ENCODE measurements at regions of chr7 and their contacts with region 1.

Region 1: DNA sequence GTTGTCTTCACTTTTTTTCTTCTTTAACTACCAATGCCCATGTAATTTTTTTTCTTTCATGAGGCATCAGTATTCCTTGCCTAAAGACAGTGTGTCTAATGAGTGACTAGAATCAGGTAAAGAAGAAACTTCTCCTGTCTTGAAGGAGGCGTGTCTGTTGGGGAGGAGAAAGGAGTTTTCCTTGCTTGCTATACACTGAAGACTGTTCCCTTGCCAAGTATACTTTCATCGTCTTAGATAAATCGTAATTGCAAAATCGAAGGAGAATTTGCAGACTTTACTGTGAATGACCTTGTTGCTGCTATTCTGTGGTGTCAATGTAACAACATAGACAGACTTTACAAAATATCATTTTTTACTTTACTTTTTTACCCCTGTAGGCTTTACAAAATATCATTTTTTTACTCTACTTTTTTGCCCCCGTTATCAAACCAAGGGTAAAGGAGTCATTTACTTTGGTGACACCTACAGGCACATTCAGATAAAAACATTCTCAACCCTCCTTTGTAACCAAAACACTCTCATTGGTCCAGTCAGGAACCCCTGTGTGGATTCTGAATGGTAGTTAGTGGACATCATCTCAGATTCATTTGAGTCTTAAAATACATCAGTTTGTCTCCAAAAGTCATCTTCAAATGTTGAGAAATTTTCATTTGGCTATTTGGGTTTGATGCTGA is 232.4 kb downstream of the AHR start:
- DNase-seq: peak; percentile 44
- H3K4me3 Mint-ChIP-seq: no peak overlapping the region
- H3K27ac Mint-ChIP-seq: peak overlapping the region; percentile 52
- H3K4me1 Mint-ChIP-seq: peaks cover 45% of the 10 kb centered on the region
- H3K27me3 Mint-ChIP-seq: no peaks in the 10 kb centered on the region
- CTCF ChIP-seq: peak; percentile 17

Region 2: DNA sequence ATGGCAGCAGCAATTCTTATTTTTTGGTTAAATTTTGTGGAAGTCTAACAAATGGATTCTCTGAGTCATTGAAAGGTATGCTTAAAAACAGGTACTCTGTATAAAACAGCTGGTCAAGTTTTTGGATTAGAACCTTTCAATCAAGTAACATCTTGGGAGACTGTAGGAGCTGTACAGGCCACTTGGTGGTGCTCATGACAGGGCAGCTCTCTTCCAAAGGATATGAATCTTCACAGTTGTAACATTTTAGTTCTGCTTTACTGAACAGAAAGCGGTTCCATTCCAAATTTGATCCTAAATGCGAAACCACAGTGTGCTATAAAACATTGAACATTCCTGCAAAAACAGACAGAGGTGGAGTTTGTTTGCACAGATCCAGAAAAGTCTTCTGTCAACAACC is 604.6 kb before region 1 on chr7:
- CTCF ChIA-PET with region 1: no interaction called
- POLR2A ChIA-PET with region 1: no interaction called
- intact Hi-C with region 1: loop called (anchors 10 kb)
- DNase-seq: peak; percentile 63
- H3K4me3 Mint-ChIP-seq: no peak overlapping the region
- H3K27ac Mint-ChIP-seq: no peak overlapping the region
- H3K4me1 Mint-ChIP-seq: peaks cover 24% of the 10 kb centered on the region
- H3K27me3 Mint-ChIP-seq: no peaks in the 10 kb centered on the region
- CTCF ChIP-seq: peak; percentile 71

Region 3: GRCh38 chr7:17640730-17641377 is 110.0 kb after region 1 on chr7:
- CTCF ChIA-PET with region 1: interaction called, 18 read pairs
- POLR2A ChIA-PET with region 1: no interaction called
- intact Hi-C with region 1: loop called (anchors 5 kb)
- DNase-seq: peak; percentile 66
- H3K4me3 Mint-ChIP-seq: no peak overlapping the region
- H3K27ac Mint-ChIP-seq: no peak overlapping the region
- H3K4me1 Mint-ChIP-seq: peaks cover 19% of the 10 kb centered on the region
- H3K27me3 Mint-ChIP-seq: no peaks in the 10 kb centered on the region
- CTCF ChIP-seq: peak; percentile 48